ENCODE measurements at regions of chr16 and their contacts with region 1.

Region 1: GRCh38 chr16:55701442-55702319 is 45.9 kb downstream of the SLC6A2 start:
- DNase-seq: peak; percentile 61
- H3K4me3 ChIP-seq: no peak overlapping the region
- H3K27ac ChIP-seq: no peak overlapping the region
- H3K4me1 ChIP-seq: peaks cover 11% of the 10 kb centered on the region
- H3K27me3 ChIP-seq: no peaks in the 10 kb centered on the region
- CTCF ChIP-seq: peak; percentile 62

Region 2: DNA sequence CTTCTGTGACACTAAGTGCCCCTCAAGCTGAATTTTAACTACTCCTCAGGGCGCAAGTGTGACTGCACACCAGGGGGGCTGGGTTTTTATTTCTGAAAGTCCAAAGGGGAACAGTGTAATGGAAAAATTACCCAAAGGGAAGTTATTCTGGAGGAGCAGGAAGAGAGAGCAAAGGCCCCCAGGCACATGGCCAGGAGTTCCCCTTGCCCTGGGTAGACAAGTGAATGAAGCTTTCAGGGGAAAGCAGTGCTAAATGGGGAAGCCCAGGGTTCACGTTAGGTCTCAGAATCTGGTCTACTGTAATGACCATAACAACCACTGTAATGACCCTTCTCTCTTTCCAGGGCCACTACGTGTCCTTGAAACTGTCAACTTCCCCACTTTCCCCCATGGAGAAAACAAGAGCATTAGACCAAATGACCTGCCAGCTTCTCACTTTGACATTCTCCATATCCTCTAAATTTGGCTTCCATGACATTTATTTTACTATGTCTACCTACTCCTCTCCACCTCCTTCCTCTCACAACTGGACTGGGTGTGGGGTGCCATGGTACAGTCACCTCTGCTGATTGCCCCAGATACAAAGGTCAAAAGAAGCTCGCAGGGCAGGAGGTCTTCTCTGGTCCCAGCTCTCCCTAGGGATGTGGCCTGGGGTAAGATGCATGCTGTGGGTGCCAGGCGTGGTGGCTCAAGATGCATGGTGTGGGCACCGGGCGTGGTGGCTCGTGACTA is 256.8 kb before region 1 on chr16:
- CTCF ChIA-PET with region 1: no interaction called
- POLR2A ChIA-PET with region 1: no interaction called
- intact Hi-C with region 1: no loop called
- DNase-seq: no peak
- H3K4me3 ChIP-seq: no peak overlapping the region
- H3K27ac ChIP-seq: no peak overlapping the region
- H3K4me1 ChIP-seq: no peaks in the 10 kb centered on the region
- H3K27me3 ChIP-seq: peaks cover 3% of the 10 kb centered on the region
- CTCF ChIP-seq: no peak

Region 3: DNA sequence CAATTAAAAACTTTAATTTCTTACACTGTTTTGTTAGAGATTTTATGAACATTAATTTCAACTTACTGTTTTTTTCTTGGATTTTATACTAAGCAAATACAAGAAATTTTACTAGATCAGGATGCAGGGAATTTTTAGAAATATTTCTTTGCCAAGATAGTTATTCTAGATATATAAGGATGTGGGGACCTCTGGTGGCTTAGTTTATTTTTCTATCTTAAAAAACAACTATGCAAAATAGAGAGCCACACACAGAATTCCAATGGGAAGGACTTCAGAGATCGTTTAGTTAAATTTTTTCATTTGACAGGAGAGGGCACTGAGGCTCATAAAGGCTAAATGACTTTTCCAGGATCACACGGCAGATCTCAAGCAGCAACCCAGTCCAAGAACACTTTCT is 158.2 kb before region 1 on chr16:
- CTCF ChIA-PET with region 1: no interaction called
- POLR2A ChIA-PET with region 1: no interaction called
- intact Hi-C with region 1: loop called (anchors 5 kb)
- DNase-seq: peak; percentile 44
- H3K4me3 ChIP-seq: no peak overlapping the region
- H3K27ac ChIP-seq: no peak overlapping the region
- H3K4me1 ChIP-seq: no peaks in the 10 kb centered on the region
- H3K27me3 ChIP-seq: no peaks in the 10 kb centered on the region
- CTCF ChIP-seq: peak; percentile 51; the same call in 1 of the 2 replicates

Region 4: DNA sequence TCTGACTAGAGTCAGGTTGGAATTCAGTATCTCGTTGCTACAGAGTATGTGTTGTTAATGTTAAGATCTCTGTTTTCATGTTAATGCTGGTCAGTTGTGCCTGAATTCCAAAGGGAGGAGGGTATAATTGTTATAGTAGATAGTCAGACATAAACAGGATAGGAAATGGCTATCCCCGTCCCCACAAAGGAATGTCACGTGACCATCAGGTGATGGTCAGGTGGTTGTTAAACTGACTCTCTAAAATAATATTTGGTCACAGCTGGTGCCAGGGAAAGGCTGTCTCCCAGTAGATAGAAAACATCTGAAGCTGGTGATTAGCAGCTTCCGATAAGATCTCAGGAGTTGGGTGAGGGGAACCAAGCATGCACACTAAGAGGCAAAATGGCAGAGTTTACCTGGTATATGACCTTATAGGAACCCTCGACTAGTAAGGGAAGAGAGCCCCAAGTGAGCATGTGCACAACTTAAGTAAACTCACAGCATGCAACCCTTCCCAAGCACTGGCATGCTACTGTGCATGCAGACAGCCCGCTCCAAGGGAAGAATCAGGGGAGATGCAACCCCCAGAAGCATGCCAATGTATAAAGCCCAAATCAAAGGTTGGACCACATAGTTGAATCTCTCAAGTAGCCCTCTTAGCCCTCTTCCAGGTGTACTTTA is 73.2 kb before region 1 on chr16:
- CTCF ChIA-PET with region 1: no interaction called
- POLR2A ChIA-PET with region 1: no interaction called
- intact Hi-C with region 1: no loop called
- DNase-seq: no peak
- H3K4me3 ChIP-seq: no peak overlapping the region
- H3K27ac ChIP-seq: no peak overlapping the region
- H3K4me1 ChIP-seq: no peaks in the 10 kb centered on the region
- H3K27me3 ChIP-seq: no peaks in the 10 kb centered on the region
- CTCF ChIP-seq: no peak